ENCODE measurements at regions of chr5 and their contacts with region 1.

Region 1: DNA sequence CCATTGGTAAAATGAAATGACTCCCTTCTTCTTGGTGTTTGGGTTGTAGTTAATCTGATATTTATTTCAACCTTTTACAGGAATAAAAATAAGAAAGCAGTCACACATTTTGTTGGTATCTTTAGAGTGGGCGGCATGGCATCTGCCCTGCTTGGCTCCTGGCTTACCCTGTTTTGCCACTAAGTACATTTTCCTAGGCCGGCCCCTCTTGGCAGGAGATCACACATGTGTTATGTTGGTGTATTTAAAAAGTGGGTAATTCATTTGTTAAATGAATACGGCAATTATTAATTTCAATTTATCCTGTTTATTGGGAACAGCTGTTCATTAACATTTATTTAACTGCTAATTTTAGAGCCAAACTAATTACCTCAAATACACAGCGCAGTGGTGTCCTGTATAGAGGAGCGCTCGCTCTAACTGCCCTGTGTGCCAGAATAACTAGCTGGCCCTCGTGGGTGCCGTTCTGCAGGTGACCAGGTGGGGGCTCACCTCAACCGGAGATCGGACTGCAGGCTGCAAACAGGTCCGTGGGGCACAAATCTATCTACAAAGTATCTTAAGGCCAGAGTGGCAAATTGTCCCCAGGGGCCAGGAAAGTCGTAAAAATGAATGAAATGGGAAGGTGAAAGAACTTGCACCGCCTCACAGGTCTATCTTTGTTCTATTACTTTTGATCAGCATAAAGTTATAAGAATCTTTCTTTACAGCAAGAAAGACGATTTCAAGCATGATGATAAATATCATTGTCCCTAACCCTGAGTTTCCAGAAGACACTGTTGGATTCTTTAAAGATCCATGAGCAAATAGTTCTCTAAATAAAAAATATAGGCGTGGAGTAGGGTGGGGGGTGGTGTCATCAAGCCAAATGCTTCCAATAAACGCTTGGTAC is 26.2 kb upstream of the GPR151 start:
- DNase-seq: no peak
- H3K4me3 ChIP-seq: no peak overlapping the region
- CTCF ChIP-seq: peak; percentile 92

Region 2: DNA sequence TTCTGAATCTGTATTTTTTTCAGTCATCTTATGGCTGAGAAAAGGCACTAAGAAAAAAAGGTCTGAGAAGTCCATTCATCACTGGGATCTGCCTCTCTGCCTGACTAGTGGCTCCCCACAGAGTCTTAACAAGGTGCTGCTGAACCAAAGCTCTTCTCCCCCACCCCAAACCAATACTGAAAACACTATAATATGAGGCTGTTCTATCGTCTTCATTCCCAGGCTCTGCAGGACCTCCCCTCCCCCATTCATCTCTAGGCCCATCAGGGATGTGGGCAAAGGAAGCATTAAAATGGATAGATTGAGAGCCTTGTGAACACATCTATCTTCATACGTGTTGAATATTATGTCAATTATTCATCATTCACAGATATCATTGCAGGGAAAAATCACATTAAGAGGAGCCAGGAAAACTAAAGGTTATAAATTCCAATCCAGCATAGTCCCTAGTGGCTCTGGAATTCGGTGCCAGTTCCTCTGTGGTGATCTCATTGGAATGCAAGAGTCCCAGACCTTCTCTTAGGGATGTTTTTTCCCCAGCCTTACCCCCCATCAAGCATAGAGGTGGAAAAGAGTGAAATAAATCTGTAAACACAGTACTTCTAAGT is 18.1 kb after region 1 on chr5:
- CTCF ChIA-PET with region 1: interaction called, 12 read pairs
- POLR2A ChIA-PET with region 1: no interaction called
- DNase-seq: no peak
- H3K4me3 ChIP-seq: no peak overlapping the region
- CTCF ChIP-seq: no peak

Region 3: GRCh38 chr5:146622391-146622790 is 80.2 kb after region 1 on chr5:
- CTCF ChIA-PET with region 1: interaction called, 18 read pairs
- POLR2A ChIA-PET with region 1: no interaction called
- DNase-seq: no peak
- H3K4me3 ChIP-seq: no peak overlapping the region
- CTCF ChIP-seq: no peak

Measured in AG04449 (cell line).